Activated CD4-positive, alpha-beta T cell treated with anti-CD3 and anti-CD28 coated beads, Interleukin-2, amount 10 ng/mL, durations not matched to agents 24 days and 14 days (primary cell): ENCODE measurements at regions of chr6 and their contacts with region 1.

Region 1: DNA sequence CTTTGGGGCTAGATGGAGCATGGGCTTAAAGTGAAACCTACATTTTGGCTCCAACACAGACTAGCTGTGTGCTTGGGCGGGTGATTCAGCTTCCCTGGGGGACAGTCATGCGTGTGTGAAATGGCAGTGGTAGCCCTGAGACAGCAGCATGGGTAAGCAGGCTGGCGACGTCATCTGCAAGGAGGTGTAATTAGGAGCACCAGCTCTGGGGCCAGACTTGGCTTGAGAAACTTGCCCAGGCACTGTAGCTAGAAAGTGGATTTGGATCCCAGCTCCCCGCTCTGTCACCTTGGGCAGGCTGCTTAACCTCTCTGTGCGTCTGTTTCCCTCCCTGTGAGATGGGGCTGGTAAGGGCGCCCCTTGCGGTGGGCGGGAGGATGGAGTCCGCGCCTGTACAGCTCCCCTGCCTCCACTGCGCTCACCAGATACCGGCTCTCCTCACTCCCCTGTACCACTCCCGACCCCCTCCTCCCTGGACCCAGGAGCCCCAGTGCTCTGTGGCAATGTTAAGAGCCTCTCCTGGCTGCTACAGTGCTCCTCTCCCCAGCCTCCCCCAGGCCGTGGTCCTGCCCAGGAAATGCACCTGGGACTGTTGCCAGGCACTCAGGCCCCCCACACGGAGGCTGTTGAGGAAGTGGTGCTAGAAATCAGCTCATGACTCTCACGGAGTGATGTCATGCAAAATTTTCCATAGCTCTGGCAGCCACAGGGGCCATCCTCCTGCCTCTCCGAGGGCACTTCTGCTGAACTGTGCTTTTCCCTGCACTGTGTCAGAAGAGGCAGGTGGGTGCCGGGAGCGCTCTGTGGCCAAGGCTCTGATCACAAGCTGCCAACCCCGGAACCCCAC is 44.6 kb downstream of the SYNJ2 start:
- DNase-seq: peak; percentile 92
- H3K4me3 Mint-ChIP-seq: peak overlapping the region; percentile 78
- H3K27ac Mint-ChIP-seq: peak overlapping the region; percentile 100
- H3K4me1 Mint-ChIP-seq: peaks cover 34% of the 10 kb centered on the region
- H3K27me3 Mint-ChIP-seq: no peaks in the 10 kb centered on the region

Region 2: DNA sequence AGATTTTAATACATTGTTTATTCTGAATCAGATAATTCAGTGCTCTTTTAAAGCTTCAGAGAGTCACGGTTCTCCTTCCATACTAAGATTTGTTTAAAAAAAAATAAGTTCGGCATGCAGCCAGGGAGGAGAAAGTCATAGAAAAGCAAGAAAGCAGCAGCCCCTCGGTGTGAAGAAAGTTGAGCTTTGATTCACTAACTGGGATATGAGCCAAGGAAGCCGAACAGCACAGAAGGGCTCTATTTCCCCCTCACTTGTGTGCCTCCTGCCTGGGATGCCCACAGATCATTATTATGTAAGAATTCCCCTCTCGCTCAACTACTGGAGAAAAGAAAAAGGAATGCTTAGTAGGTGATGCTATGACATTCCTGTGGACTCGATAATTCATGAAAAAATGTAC is 114.0 kb before region 1 on chr6:
- intact Hi-C with region 1: no loop called
- DNase-seq: no peak
- H3K4me3 Mint-ChIP-seq: no peak overlapping the region
- H3K27ac Mint-ChIP-seq: no peak overlapping the region
- H3K4me1 Mint-ChIP-seq: peaks cover 13% of the 10 kb centered on the region
- H3K27me3 Mint-ChIP-seq: no peaks in the 10 kb centered on the region

Region 3: GRCh38 chr6:157962601-157963302 is 63.5 kb before region 1 on chr6:
- intact Hi-C with region 1: loop called (anchors 10 kb)
- DNase-seq: peak; percentile 80
- H3K4me3 Mint-ChIP-seq: peak overlapping the region; percentile 80
- H3K27ac Mint-ChIP-seq: peak overlapping the region; percentile 95
- H3K4me1 Mint-ChIP-seq: peaks cover 29% of the 10 kb centered on the region
- H3K27me3 Mint-ChIP-seq: no peaks in the 10 kb centered on the region

Region 4: DNA sequence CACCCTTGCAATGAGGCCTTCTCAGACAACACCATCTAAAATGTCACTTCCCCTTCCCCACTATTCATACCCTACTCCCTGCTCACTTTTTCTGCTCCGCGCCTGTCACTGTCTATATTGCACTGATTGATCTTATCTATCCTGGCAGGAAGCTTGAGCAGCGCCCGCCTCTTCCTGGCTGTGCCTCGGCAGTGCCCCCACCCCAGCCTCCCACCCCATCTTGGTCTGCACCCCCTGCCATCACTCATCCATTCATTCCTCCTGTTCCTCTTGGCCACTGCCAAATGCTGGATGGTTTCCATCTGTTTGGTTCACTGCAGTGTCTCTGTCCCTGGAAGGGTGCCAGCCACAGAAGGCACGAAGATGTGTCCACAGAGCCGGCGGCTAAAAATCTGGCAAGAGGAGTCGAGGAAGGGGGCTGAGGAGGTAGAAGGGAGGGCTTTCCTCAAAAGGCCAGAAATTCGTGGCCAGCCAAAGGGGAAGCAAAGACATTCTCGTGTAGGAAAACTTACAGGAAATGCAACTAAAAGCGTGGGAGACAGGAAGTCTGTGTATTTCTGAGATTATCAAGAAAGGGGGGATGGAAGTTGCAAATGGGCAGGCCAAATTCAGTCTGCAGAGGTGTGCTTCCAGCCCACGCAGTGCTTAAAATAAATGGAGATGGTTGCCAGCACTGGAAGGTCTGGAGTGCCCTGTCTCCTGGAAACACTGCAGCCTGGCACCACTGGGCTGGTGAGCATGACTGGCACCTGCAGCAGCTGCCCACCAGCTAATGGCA is 17.0 kb before region 1 on chr6:
- intact Hi-C with region 1: loop called (anchors 2 kb)
- DNase-seq: no peak
- H3K4me3 Mint-ChIP-seq: peak overlapping the region; percentile 63
- H3K27ac Mint-ChIP-seq: peak overlapping the region; percentile 63
- H3K4me1 Mint-ChIP-seq: peaks cover 65% of the 10 kb centered on the region
- H3K27me3 Mint-ChIP-seq: no peaks in the 10 kb centered on the region

Region 5: DNA sequence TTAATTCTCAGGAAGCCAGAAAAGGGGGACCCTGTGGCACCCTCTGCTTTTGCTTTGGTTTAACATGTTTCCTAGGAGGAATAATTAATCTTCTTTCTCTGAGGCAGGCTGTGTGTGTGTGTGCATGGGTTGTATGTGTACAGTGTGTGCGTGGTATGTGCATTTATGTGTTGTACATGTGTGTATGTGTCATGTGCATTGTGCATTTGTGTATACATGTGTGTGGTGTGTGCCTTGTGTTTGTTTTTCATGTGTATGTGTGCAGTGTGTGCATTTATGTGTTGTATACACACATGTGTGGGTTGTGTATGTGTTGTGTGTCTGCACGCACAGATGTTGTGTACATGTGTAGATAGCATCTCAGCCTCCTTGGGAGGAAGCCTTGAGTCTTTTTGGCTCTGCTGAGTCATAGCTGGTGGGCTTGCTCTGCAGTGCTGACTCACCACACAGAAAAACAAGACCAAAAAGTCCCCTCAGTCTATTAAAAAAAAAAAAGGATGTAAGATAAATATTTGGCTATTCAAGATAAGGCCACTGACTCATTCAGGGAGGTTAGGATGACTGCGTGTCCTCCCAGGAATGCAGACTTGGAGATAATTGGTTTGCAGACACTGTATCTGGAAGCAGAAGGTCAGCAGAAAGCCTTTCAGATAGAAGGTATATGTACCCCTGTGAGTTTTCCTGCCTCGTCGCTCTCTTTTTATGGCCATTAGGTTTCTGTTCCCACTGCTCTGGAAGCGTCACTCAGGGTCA is 13.9 kb after region 1 on chr6:
- intact Hi-C with region 1: no loop called
- DNase-seq: peak; percentile 72
- H3K4me3 Mint-ChIP-seq: peak overlapping the region; percentile 62
- H3K27ac Mint-ChIP-seq: peak overlapping the region; percentile 74
- H3K4me1 Mint-ChIP-seq: peaks cover 37% of the 10 kb centered on the region
- H3K27me3 Mint-ChIP-seq: no peaks in the 10 kb centered on the region

Region 6: GRCh38 chr6:158057213-158057987 is 31.1 kb after region 1 on chr6:
- intact Hi-C with region 1: loop called (anchors 1 kb)
- DNase-seq: no peak
- H3K4me3 Mint-ChIP-seq: peak overlapping the region; percentile 1
- H3K27ac Mint-ChIP-seq: no peak overlapping the region
- H3K4me1 Mint-ChIP-seq: peaks cover 37% of the 10 kb centered on the region
- H3K27me3 Mint-ChIP-seq: no peaks in the 10 kb centered on the region